Activated CD4-positive, alpha-beta T cell treated with anti-CD3 and anti-CD28 coated beads, Interleukin-2, amount 10 ng/mL, durations not matched to agents 24 days and 14 days (primary cell): ENCODE measurements at regions of chr17 and their contacts with region 1.

Region 1: GRCh38 chr17:68346448-68346847 is 55.2 kb downstream of the ARSG start:
- DNase-seq: peak; percentile 89
- H3K4me3 Mint-ChIP-seq: peak overlapping the region; percentile 81
- H3K27ac Mint-ChIP-seq: peak overlapping the region; percentile 94
- H3K4me1 Mint-ChIP-seq: peaks cover 62% of the 10 kb centered on the region
- H3K27me3 Mint-ChIP-seq: no peaks in the 10 kb centered on the region

Region 2: DNA sequence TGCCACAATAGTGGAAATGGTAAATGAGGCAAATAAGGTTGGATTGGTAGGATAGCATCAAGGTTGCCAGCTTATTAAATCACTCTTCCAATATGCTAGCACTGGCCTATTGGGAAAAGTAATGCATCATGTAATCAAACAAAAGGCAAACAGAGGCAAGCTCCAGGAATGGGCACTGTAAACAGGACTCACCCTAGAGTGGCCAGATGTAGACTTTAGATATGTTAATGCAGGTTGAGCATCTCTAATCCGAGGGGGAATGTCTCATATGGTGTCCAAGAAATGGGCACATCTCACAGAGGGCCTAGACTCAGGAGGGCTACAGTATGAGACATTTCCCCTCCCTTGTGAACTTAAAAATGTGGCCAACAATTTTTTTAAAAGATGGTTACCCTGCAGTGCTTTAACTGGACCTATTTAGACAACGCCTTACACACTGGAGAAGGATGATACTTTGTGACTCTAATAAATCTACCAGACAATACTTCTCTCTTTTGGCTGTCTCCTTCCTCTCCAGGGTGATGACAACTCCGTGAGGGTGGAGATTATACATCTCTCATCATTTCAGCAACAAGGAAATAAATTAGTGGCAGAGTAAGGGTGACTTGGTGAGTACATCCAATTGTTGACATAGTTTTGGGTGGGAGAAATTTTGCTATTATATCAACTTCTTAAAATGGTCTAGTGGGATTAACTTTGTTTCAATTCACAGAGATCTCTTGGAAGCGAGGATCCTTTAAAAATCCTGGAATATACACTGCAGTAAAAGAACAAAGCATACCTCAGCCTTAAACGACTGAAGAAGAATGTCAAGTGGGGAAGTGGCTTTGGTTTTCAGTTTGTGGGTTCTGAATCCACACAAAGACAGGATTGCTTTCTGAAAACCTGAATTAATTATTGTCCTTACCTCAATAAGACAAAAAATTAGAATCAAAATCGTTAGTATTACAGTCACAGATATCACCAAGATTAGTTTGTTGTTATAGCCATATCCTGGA is 221.3 kb before region 1 on chr17:
- intact Hi-C with region 1: no loop called
- DNase-seq: no peak
- H3K4me3 Mint-ChIP-seq: no peak overlapping the region
- H3K27ac Mint-ChIP-seq: no peak overlapping the region
- H3K4me1 Mint-ChIP-seq: peaks cover 9% of the 10 kb centered on the region
- H3K27me3 Mint-ChIP-seq: no peaks in the 10 kb centered on the region

Region 3: GRCh38 chr17:68310152-68310551 is 36.3 kb before region 1 on chr17:
- intact Hi-C with region 1: loop called (anchors 2 kb)
- DNase-seq: peak; percentile 81
- H3K4me3 Mint-ChIP-seq: peak overlapping the region; percentile 40
- H3K27ac Mint-ChIP-seq: no peak overlapping the region
- H3K4me1 Mint-ChIP-seq: peaks cover 40% of the 10 kb centered on the region
- H3K27me3 Mint-ChIP-seq: peaks cover 1% of the 10 kb centered on the region

Region 4: DNA sequence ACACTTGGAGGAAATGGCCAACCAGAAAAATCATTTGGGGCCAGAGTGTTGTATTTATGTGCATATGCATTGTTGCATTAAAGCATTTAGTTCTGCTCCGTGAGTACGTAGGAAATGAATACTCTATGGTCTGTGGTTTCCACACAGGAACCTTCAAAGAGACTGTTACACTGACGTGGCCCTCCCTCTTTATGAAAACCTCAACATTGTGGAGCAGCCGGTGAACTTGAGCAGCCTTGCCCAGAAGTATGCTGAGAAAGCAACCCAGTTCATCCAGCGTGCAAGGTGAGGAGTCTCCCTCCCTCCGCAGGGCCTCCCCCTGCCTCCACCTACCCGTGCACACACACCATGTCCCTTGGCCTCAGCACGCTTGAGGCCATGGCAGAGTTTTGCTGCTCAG is 10.1 kb after region 1 on chr17:
- intact Hi-C with region 1: loop called (anchors 1 kb)
- DNase-seq: peak; percentile 93
- H3K4me3 Mint-ChIP-seq: peak overlapping the region; percentile 59
- H3K27ac Mint-ChIP-seq: peak overlapping the region; percentile 77
- H3K4me1 Mint-ChIP-seq: peaks cover 56% of the 10 kb centered on the region
- H3K27me3 Mint-ChIP-seq: no peaks in the 10 kb centered on the region

Region 5: GRCh38 chr17:68381076-68381900 is 34.8 kb after region 1 on chr17:
- intact Hi-C with region 1: loop called (anchors 5 kb)
- DNase-seq: no peak
- H3K4me3 Mint-ChIP-seq: no peak overlapping the region
- H3K27ac Mint-ChIP-seq: no peak overlapping the region
- H3K4me1 Mint-ChIP-seq: peaks cover 25% of the 10 kb centered on the region
- H3K27me3 Mint-ChIP-seq: no peaks in the 10 kb centered on the region

Region 6: GRCh38 chr17:68399638-68400403 is 53.4 kb after region 1 on chr17:
- intact Hi-C with region 1: loop called (anchors 1 kb)
- DNase-seq: peak; percentile 80
- H3K4me3 Mint-ChIP-seq: peak overlapping the region; percentile 62
- H3K27ac Mint-ChIP-seq: peak overlapping the region; percentile 88
- H3K4me1 Mint-ChIP-seq: peaks cover 33% of the 10 kb centered on the region
- H3K27me3 Mint-ChIP-seq: no peaks in the 10 kb centered on the region

Region 7: DNA sequence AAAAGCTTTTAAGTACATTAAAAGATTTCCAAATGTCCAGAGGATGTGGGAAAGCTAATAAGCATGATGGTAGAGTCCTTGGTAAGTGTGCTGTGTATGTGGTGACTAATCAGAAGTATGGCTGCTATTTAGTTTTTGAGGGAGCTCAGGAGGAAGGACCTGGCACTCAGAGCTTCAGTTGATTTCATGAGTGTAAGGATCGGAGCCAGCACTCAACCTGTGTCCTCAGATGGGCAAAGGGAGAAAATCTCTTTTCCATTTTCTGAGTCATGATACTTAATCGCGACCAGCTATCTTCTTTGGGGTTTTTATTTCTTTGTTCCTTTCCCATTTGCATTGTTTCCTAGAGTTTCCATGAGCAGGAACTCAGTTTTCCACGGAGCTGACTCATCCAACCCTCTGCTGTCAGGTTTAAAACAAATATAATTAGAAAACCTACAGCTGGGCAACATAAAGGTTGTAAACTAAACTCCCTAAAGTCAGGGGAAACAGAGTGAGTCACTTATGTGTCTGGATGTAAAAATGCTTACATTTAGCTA is 1193.4 kb after region 1 on chr17:
- intact Hi-C with region 1: no loop called
- DNase-seq: no peak
- H3K4me3 Mint-ChIP-seq: no peak overlapping the region
- H3K27ac Mint-ChIP-seq: no peak overlapping the region
- H3K4me1 Mint-ChIP-seq: peaks cover 6% of the 10 kb centered on the region
- H3K27me3 Mint-ChIP-seq: no peaks in the 10 kb centered on the region